ENCODE measurements at regions of chr22 and their contacts with region 1.

Region 1: DNA sequence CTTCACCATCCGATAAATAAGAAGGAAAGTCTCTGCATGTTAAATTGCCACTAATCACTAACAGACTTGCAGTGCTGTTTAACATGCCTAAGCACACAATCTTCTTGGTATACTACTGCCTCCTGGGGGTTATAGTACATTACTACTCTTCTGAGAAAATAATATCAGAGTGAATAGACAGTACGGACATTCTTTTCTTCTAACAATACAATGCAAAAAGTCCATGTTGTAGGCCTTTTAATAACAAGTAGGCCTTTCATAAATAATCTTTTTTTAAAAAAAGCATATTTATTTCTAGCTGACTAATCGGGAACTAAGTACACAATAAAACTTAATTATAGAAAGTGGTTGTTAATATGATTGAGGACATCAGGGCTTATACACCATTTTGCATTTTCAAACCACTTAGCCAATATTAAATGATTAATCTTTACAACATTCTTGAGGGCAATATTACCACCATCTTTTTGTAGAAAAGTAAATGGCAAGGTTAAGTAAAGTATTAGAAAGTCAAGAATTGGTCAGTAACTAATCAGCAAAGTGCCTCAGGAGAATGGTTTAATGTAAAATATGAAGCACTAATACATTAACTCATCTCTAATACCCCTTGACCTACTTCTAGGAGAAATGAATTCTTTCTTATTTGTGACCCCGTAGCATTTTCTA is 84.7 kb downstream of the TTC28 start:
- DNase-seq: no peak
- H3K4me3 ChIP-seq: no peak overlapping the region
- H3K27ac ChIP-seq: no peak overlapping the region
- H3K4me1 ChIP-seq: peaks cover 0 to 3% (median 1%) of the 10 kb centered on the region in 4 donors
- H3K27me3 ChIP-seq: no peaks in the 10 kb centered on the region
- CTCF ChIP-seq: peak; percentile 63 to 83 (median 68)
- EP300 ChIP-seq: no peak
- POLR2A ChIP-seq: no peak

Region 2: GRCh38 chr22:27880778-27881394 is 714.0 kb before region 1 on chr22:
- in situ Hi-C with region 1: loop called in 3 of 4 experiments (anchors 25 kb)
- intact Hi-C with region 1: no loop called
- DNase-seq: no peak
- H3K4me3 ChIP-seq: no peak overlapping the region
- H3K27ac ChIP-seq: peak overlapping the region; percentile 68 to 85 (median 80)
- H3K4me1 ChIP-seq: peaks cover 23 to 86% (median 40%) of the 10 kb centered on the region in 4 donors
- H3K27me3 ChIP-seq: no peaks in the 10 kb centered on the region
- CTCF ChIP-seq: peak; percentile 74 to 84 (median 80)
- EP300 ChIP-seq: no peak
- POLR2A ChIP-seq: no peak

Region 3: DNA sequence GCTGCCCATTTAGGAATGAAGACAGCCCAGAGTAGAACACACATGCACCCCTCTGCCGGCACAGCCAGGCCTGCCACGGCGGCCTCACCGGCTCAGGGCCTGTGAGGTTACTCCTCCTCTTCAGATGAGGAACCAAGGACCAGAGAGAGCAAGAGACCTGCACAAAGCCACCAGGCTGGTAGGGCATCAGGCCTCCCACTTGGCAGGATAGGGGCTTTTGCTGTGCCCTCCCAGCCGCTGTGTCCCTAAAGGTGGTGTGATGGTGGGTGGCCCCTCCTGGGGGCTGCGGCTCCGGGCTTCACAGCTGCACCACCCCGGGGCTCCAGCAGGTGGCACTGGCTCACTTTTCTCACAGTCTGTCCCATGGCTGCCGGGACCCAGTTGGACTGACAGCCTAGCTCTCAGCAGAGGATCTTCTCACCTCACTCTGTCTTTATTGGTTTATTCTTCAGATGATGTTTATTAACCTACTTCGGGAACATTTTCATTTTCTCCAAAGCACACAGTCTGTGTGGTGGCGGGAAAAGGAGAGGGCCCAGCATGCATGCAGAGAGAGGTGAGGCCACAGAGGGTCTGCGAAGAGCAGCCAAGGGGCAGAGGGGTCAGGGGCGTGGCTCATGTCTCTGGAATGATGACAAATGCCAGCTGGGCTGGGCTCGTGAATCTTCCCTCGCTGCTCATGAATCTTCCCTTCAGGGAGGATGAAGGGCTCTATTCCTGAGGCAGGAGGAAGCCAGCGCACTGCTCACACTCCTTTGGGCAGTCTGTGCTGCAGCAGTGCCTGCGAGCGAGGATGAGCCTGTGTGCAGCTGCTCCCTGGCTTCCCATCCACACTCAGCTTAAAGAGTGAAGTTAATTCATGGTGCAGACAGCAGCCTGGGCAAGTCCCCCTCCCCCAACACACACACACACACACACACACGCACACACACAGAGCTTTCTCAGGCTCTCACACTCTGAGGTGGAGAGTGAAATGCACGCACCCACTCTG is 574.8 kb before region 1 on chr22:
- in situ Hi-C with region 1: loop called in 2 of 4 experiments (anchors 10 kb)
- intact Hi-C with region 1: no loop called
- DNase-seq: peak; percentile 68
- H3K4me3 ChIP-seq: no peak overlapping the region
- H3K27ac ChIP-seq: peak overlapping the region in 2 of 4 donors; percentile 17 to 63
- H3K4me1 ChIP-seq: peaks cover 2 to 14% (median 10%) of the 10 kb centered on the region in 4 donors
- H3K27me3 ChIP-seq: no peaks in the 10 kb centered on the region
- CTCF ChIP-seq: peak; percentile 85 to 94 (median 92)
- EP300 ChIP-seq: no peak
- POLR2A ChIP-seq: no peak

Region 4: DNA sequence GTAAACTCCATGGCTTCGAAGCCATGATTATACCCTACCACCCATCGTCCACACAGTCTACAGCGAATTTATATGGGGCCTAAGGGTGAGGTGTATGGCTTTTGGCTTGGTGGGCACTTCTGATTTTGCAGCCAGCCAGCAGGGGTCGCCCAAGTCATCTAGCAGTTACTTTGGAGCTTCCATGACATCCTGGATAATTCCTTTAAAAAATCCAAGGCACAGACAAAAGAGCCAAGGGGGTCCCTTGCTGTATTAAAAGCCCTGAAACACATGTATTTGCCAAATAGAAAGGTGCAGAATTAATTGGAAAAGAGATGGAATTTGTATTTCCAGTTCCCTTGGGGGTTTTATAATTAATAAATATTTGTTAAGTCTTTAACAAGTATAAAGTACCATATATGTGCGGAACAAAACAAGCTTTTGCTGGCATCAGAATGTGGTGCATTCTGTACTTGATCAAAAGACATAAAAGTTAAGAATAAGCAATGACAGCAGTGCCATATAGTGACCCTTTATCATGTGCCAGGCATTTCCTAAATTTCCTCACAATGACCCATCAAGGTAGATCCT is 543.1 kb before region 1 on chr22:
- in situ Hi-C with region 1: loop called (anchors 10 kb)
- intact Hi-C with region 1: loop called (anchors 5 kb)
- DNase-seq: peak; percentile 67
- H3K4me3 ChIP-seq: no peak overlapping the region
- H3K27ac ChIP-seq: no peak overlapping the region
- H3K4me1 ChIP-seq: no peaks in the 10 kb centered on the region
- H3K27me3 ChIP-seq: no peaks in the 10 kb centered on the region
- CTCF ChIP-seq: peak; percentile 78 to 81 (median 80)
- EP300 ChIP-seq: no peak
- POLR2A ChIP-seq: no peak

Region 5: DNA sequence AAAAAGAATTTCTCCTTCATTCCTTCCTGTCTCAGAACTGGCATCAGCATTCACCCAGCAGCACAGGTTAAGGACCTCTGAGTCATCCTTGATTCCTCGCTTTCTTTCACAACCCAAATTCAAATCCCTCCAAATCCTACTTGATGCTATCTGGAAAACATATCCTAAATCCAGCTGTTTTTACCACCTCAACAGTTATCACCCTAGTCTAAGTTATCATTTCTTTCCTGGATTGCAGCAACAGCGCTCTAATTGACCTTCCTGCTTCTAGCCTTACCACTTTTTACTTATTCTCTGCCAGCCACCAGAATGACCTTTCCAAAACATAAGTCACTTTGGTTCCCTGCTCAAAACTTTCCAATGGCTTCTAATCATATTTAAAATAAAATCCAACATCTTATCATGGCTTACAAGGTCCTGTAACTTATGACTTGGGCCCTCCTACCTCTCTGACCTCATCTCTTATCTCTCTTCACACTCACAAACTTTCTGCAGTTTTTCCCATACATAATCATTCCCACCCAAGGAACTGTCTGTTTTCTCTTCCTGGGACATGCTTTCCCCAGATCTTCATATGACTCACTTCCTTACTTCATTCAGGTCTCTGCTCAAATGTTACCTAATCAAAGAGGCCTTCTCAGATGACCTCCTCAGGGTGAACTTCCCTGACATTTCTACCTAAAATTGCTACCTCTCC is 34.7 kb before region 1 on chr22:
- in situ Hi-C with region 1: no loop called
- intact Hi-C with region 1: no loop called
- DNase-seq: no peak
- H3K4me3 ChIP-seq: no peak overlapping the region
- H3K27ac ChIP-seq: no peak overlapping the region
- H3K4me1 ChIP-seq: no peaks in the 10 kb centered on the region
- H3K27me3 ChIP-seq: no peaks in the 10 kb centered on the region
- CTCF ChIP-seq: no peak
- EP300 ChIP-seq: no peak
- POLR2A ChIP-seq: no peak

Region 6: DNA sequence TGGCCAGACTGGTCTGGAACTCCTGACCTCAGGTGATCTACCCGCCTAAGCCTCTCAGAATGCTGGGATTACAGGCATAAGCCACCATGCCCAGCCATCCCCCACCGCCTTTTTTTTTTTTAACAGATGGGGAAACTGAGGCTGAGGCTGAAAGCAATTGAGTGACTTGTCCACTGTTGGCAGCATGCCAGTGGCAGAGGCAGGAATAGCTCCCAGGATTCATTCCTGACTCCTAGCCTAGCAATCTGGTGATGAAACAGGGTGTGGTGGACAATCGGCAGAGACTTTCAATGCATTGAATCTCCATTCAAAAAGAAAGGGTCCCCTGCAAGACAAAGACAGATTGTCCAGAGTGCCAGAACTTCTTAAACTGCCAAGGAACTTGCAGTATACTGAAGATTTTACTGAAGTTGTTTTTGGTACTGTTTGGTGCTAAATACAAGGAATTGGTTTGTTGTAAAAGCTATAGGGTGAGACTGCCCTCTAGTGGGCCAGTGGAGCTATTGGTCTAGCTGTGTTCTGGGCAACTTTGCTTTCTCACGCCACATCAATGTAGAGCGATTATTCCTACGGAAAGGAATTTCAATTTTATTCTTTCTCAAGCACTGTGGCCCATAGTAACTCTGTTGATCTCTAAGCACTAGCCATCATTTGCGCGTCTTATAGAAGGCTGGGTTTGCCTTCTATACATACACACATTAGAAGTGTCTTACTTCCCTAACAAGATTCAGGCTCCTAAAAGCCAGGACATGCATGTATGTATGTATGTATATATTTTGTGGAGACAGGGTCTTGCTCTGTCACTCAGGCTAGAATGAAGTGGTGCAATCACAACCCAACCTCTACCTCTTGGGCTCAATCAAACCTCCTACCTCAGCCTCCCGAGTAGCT is 445.7 kb after region 1 on chr22:
- in situ Hi-C with region 1: loop called in 3 of 4 experiments (anchors 25 kb)
- intact Hi-C with region 1: no loop called
- DNase-seq: peak; percentile 66
- H3K4me3 ChIP-seq: no peak overlapping the region
- H3K27ac ChIP-seq: peak overlapping the region in 1 of 4 donors; percentile 22
- H3K4me1 ChIP-seq: peaks cover 7 to 34% (median 19%) of the 10 kb centered on the region in 4 donors
- H3K27me3 ChIP-seq: no peaks in the 10 kb centered on the region
- CTCF ChIP-seq: peak; percentile 92 to 98 (median 96)
- EP300 ChIP-seq: no peak
- POLR2A ChIP-seq: no peak

Region 7: DNA sequence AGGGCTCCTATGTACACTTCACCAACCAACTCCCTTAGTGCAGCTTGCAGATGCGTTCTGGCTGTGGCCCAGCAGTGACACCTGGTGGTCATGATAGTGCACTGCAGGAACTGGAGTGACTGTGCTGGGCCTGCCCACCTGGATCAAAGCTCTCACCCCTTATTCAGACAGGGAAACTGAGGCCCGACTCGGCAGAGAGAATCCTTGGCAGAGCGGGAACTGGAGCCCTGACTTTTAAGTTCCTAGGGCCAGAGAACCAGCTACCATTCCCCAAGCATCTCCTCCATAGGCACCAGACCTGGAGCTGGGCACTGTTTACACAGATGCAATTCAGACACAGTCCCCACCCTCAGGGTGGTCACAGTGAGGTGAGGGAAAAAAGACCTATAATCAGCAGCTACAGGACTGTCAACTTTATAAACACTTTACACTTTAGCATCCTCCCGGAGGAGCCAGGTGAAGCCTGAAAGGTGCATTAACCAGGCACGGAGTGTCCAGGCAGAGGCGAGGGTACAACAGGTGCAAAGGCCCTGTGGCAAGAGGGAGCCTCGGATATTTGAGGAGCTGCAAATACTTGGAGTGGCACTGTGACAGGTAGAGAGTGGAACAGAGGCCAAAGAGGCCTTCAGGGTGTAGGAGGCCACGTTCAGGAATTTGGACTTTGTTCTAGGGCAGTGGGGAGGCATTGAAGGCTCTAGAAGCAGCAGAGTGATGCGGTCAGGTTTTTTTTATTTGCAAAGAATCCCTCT is 650.9 kb after region 1 on chr22:
- in situ Hi-C with region 1: loop called in 1 of 4 experiments (anchors 25 kb)
- intact Hi-C with region 1: no loop called
- DNase-seq: peak; percentile 75
- H3K4me3 ChIP-seq: no peak overlapping the region
- H3K27ac ChIP-seq: no peak overlapping the region
- H3K4me1 ChIP-seq: no peaks in the 10 kb centered on the region
- H3K27me3 ChIP-seq: no peaks in the 10 kb centered on the region
- CTCF ChIP-seq: peak; percentile 87 to 99 (median 97)
- EP300 ChIP-seq: no peak
- POLR2A ChIP-seq: no peak